K562 (cell line): ENCODE measurements at regions of chr16 and their contacts with region 1.

Region 1: GRCh38 chr16:66814734-66815133 is 13.3 kb upstream of the TERB1 start:
- DNase-seq: no peak
- ATAC-seq: no peak; the same call in 2 of the 3 replicates
- H3K4me3 ChIP-seq: no peak overlapping the region
- H3K27ac ChIP-seq: no peak overlapping the region
- H3K4me1 ChIP-seq: no peaks in the 10 kb centered on the region
- H3K27me3 ChIP-seq: no peaks in the 10 kb centered on the region
- CTCF ChIP-seq: no peak
- EP300 ChIP-seq: no peak
- POLR2A ChIP-seq: 0 out of 2 replicates have a peak, but pooled peaks have one; percentile 42
- RAD21 ChIP-seq: no peak

Region 2: DNA sequence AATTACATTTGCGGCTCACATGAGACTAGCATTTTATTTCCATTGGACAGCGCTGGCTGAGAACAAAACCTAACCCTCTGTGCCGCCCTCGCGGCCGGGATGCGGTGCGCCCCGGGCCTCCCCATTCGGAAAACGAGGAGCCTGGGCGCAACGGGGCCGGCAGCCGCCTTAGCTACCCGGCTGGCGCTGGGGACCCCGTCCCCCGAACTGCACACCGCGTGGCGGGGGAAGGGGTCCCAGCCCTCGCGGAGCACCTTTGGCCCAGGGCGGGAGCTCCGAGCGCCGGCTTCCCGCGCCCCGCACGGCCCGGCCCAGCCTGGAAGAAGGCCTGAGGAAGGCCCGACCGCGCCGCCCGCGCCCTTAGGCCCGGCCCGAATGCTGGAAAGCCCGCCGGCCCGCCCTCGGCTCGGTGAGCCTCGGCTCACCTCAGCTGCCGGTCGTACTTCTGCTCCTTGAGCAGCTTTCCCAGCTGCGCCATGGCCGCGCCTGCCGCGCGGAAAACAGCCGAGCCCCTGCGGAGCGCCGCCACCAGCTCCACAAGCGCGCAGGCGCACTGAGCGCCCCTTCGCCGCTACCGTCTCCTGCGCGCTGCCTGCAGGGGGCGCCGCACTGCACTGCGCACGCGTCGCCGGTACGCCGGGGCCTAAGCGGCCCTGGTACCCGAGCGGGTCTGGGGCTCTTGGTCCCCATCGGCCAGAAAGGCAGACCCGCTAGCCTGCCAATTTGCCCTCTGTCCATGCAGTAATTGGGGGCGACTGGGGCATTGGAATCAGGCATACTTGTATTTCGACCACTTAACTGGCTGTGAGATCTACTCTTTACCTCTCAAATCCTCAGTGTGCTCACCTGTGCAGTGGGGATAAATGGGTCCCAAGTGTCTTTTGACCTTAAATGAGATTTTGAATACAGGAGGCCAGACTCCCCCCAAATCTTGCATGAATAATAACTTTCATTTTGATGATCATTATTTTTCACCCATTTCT is 16.0 kb after region 1 on chr16 and contains the start of gene NAE1:
- CTCF ChIA-PET with region 1: no interaction called
- POLR2A ChIA-PET with region 1: interaction called, 16 read pairs
- in situ Hi-C with region 1: no loop called
- intact Hi-C with region 1: no loop called
- DNase-seq: peak; percentile 94 to 97 (median 95)
- ATAC-seq: peak; percentile 93
- H3K4me3 ChIP-seq: peak within 1 kb of the TSS; percentile 94
- H3K27ac ChIP-seq: peak within 1 kb of the TSS; percentile 91
- H3K4me1 ChIP-seq: peaks cover 9 to 11% of the 10 kb centered on the region in 2 experiments; a peak in 4 of 5 replicates
- H3K27me3 ChIP-seq: no peaks in the 10 kb centered on the region; a peak in 1 of 5 replicates
- CTCF ChIP-seq: peak; percentile 92 to 98 (median 95)
- EP300 ChIP-seq: no peak
- POLR2A ChIP-seq: peak; percentile 92
- RAD21 ChIP-seq: peak; percentile 26 to 55; a peak in 2 of 4 replicates
- polyA plus RNA-seq, gene NAE1: 257 to 275 TPM